ENCODE measurements at regions of chr11 and their contacts with region 1.

Region 1: GRCh38 chr11:73141848-73142286 is 251 bp downstream of the FCHSD2 start:
- DNase-seq: peak; percentile 76
- H3K4me3 Mint-ChIP-seq: peak overlapping the region; percentile 85
- H3K27ac Mint-ChIP-seq: peak overlapping the region; percentile 94
- H3K4me1 Mint-ChIP-seq: peaks cover 53% of the 10 kb centered on the region
- H3K27me3 Mint-ChIP-seq: peaks cover 4% of the 10 kb centered on the region

Region 2: DNA sequence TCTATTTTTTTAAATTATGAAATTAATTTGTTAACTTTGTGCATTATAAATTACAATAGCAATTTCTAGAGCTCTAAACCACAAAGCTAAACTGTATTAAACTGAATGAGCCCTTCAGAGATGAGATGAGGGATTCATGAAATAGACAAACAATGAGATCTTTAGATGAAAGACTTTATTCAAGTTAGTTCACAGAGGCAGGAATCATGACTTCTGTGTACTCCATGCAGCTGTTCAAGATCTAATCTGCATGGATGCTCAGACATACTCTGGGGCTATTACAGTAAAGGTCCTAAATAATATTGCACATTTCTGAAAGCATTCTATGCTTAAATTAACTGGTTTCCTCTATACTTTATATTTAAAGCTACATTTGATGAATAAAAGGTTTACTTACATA is 122.4 kb before region 1 on chr11:
- CTCF ChIA-PET with region 1: no interaction called
- DNase-seq: no peak
- H3K4me3 Mint-ChIP-seq: no peak overlapping the region
- H3K27ac Mint-ChIP-seq: no peak overlapping the region
- H3K4me1 Mint-ChIP-seq: no peaks in the 10 kb centered on the region
- H3K27me3 Mint-ChIP-seq: no peaks in the 10 kb centered on the region

Region 3: GRCh38 chr11:73157053-73158010 is 15.5 kb after region 1 on chr11:
- CTCF ChIA-PET with region 1: interaction called, 26 read pairs
- DNase-seq: no peak
- H3K4me3 Mint-ChIP-seq: no peak overlapping the region
- H3K27ac Mint-ChIP-seq: no peak overlapping the region
- H3K4me1 Mint-ChIP-seq: peaks cover 51% of the 10 kb centered on the region
- H3K27me3 Mint-ChIP-seq: peaks cover 11% of the 10 kb centered on the region

Measured in activated naive CD4-positive, alpha-beta T cell treated with anti-CD3 and anti-CD28 coated beads, Interleukin-2, amount 10 ng/mL, durations not matched to agents 7 days and 5 days (primary cell).